Breast epithelium (tissue), 4 donors: ENCODE measurements at regions of chr18 and their contacts with region 1.

Region 1: GRCh38 chr18:41700416-41700815 is 254.6 kb upstream of the PIK3C3 start:
- DNase-seq: no peak
- H3K4me3 ChIP-seq: no peak overlapping the region
- H3K27ac ChIP-seq: no peak overlapping the region
- H3K4me1 ChIP-seq: no peaks in the 10 kb centered on the region
- H3K27me3 ChIP-seq: no peaks in the 10 kb centered on the region
- CTCF ChIP-seq: no peak
- POLR2A ChIP-seq: no peak

Region 2: GRCh38 chr18:41751161-41751560 is 50.7 kb after region 1 on chr18:
- intact Hi-C with region 1: loop called (anchors 2 kb)
- DNase-seq: no peak
- H3K4me3 ChIP-seq: no peak overlapping the region
- H3K27ac ChIP-seq: no peak overlapping the region
- H3K4me1 ChIP-seq: no peaks in the 10 kb centered on the region
- H3K27me3 ChIP-seq: no peaks in the 10 kb centered on the region
- CTCF ChIP-seq: no peak
- POLR2A ChIP-seq: no peak